Endothelial cell of umbilical vein (primary cell): ENCODE measurements at regions of chr2 and their contacts with region 1.

Region 1: GRCh38 chr2:216498418-216499413 is at the start of gene RPL37A:
- DNase-seq: peak; percentile 96
- H3K4me3 ChIP-seq: peak within 1 kb of the TSS; percentile 85 to 99 (median 99)
- H3K27ac ChIP-seq: peak within 1 kb of the TSS; percentile 81
- H3K4me1 ChIP-seq: peaks cover 42% of the 10 kb centered on the region
- H3K27me3 ChIP-seq: no peaks in the 10 kb centered on the region
- CTCF ChIP-seq: no peak
- POLR2A ChIP-seq: peak; percentile 99
- total RNA-seq, gene RPL37A: 2,628 and 2,952 TPM in 2 replicates

Region 2: GRCh38 chr2:216139884-216140283 is 358.8 kb before region 1 on chr2:
- CTCF ChIA-PET with region 1: no interaction called
- POLR2A ChIA-PET with region 1: no interaction called
- dilution Hi-C with region 1: no loop called
- intact Hi-C with region 1: loop called (anchors 10 kb)
- DNase-seq: no peak
- H3K4me3 ChIP-seq: no peak overlapping the region
- H3K27ac ChIP-seq: no peak overlapping the region
- H3K4me1 ChIP-seq: no peaks in the 10 kb centered on the region
- H3K27me3 ChIP-seq: no peaks in the 10 kb centered on the region
- CTCF ChIP-seq: peak; percentile 15 to 18
- POLR2A ChIP-seq: no peak

Region 3: DNA sequence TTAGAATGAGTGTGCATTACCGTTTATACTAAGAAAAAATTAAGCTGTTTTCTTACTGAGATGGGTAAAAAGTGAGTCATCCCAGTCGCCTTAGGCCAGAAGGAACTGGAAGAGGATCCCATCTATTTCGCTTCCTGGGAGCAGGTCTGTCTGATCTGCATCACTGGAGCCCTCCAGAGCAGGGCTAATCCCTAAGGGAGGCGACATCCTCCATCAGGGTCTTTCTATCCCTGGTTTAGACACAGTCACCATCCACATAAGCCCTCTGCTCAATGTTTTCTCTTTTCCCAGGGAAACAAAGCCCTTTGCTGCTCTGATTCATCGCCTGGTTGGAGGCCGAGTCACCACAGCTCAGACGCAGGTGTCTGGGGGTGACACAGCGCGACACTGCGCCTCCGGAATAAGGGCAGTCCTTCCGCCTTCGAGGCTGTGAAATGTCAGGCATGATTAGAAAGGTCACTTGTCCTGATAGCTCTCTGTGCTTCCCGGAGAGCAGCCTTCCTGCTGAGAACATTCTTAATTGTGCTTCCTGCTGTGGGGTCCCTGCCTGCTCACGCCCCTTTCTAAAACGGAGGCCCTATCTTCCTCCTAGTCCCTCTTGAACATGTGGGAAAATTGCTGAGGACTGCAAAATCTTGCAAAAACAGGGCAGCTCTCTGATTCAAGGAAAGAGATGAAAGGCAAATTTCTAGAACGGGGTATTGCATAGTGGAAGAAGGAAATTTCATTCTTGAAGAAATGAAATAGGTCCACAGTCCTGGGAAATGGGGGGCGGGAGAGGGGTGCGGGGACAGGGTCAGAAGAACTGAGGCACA is 182.7 kb before region 1 on chr2:
- CTCF ChIA-PET with region 1: no interaction called
- POLR2A ChIA-PET with region 1: no interaction called
- dilution Hi-C with region 1: no loop called
- intact Hi-C with region 1: loop called (anchors 10 kb)
- DNase-seq: peak; percentile 72
- H3K4me3 ChIP-seq: no peak overlapping the region
- H3K27ac ChIP-seq: peak overlapping the region; percentile 92
- H3K4me1 ChIP-seq: peaks cover 23% of the 10 kb centered on the region
- H3K27me3 ChIP-seq: no peaks in the 10 kb centered on the region
- CTCF ChIP-seq: no peak
- POLR2A ChIP-seq: no peak

Region 4: GRCh38 chr2:216478151-216478550 is 20.6 kb before region 1 on chr2:
- CTCF ChIA-PET with region 1: interaction called, 11 read pairs
- POLR2A ChIA-PET with region 1: interaction called, 12 read pairs
- dilution Hi-C with region 1: no loop called
- intact Hi-C with region 1: no loop called
- DNase-seq: peak; percentile 95
- H3K4me3 ChIP-seq: no peak overlapping the region
- H3K27ac ChIP-seq: peak overlapping the region; percentile 54
- H3K4me1 ChIP-seq: peaks cover 19% of the 10 kb centered on the region
- H3K27me3 ChIP-seq: no peaks in the 10 kb centered on the region
- CTCF ChIP-seq: no peak
- POLR2A ChIP-seq: no peak

Region 5: DNA sequence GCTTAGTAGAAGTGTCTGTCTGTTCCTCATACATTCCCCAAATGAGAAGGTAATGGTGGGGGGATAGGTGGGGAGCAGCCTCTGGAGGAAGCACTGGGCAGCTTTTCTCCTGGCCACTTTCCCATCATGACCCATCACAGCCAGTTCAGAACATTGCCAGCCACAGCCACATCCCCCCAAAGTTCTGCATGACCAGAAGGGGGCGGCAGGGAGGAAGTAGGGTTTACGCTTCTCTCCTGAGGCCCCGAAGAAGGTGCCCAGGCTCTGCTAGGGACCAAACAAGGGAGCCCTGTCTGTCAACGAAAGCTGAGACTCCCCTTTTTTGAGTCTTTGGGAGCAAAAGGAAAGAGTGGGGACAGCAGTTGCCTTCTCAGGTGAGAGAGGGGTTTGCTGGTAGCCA is 188.9 kb after region 1 on chr2:
- CTCF ChIA-PET with region 1: no interaction called
- POLR2A ChIA-PET with region 1: no interaction called
- dilution Hi-C with region 1: no loop called
- intact Hi-C with region 1: no loop called
- DNase-seq: no peak
- H3K4me3 ChIP-seq: no peak overlapping the region
- H3K27ac ChIP-seq: no peak overlapping the region
- H3K4me1 ChIP-seq: peaks cover 10% of the 10 kb centered on the region
- H3K27me3 ChIP-seq: peaks cover 33 to 41% of the 10 kb centered on the region in 2 experiments
- CTCF ChIP-seq: peak; percentile 25 to 44
- POLR2A ChIP-seq: no peak